ENCODE measurements at regions of chr5 and their contacts with region 1.

Region 1: DNA sequence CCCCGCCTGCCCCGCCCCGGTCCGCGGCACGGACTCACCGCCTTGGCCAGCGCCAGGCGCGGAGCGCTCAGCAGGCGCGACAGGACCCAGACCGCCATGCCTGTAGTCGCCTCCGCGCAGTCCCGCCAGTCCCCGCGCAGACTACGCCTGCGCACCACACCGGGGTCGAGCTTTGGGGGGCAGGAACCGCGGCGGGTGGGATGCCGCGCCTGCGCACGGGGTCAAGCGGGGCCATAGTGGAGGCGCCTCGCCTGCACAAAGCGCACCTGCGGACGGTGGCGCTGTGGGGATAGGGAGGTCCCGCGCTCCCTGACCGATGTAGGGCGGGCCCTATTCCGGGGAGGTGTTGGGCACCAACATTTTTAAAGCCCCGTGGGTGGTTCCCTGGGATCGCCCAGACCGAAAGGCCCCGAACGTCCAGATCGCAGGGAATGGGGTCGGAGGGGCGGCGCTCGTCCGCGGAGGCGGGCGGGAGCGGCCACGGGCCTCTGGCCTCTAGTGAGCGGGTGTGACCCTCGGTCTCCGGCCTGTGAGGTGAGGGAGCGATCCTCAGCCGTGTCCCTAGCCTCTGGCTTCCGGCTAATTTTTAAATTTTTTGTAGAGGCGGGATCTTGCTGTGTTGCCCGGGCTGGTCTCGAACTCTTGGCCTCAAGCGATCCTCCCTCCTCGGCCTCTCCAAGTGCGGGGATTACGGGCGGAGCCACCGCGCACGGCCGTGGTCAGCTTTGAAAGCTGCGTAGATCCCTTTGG is 70.8 kb upstream of the LPCAT1 start:
- DNase-seq: peak; percentile 74
- ATAC-seq: peak; percentile 97
- H3K4me3 ChIP-seq: peak overlapping the region; percentile 56 to 75
- H3K27ac ChIP-seq: peak overlapping the region; percentile 79
- H3K4me1 ChIP-seq: peaks cover 0 to 9% of the 10 kb centered on the region in 2 experiments; a peak in 2 of 4 replicates
- H3K27me3 ChIP-seq: no peaks in the 10 kb centered on the region
- CTCF ChIP-seq: peak; percentile 21 to 61 (median 59); a peak in 5 of 6 replicates
- POLR2A ChIP-seq: peak; percentile 51
- RAD21 ChIP-seq: no peak

Region 2: GRCh38 chr5:1344975-1345838 is 249.3 kb before region 1 on chr5 and contains the start of gene CLPTM1L:
- CTCF ChIA-PET with region 1: no interaction called
- POLR2A ChIA-PET with region 1: no interaction called
- RAD21 ChIA-PET with region 1: no interaction called
- intact Hi-C with region 1: loop called (anchors 10 kb)
- DNase-seq: peak; percentile 61
- ATAC-seq: peak; percentile 89
- H3K4me3 ChIP-seq: peak within 1 kb of the TSS; percentile 75 to 97
- H3K27ac ChIP-seq: peak within 1 kb of the TSS; percentile 65; the same call in 1 of the 2 replicates
- H3K4me1 ChIP-seq: peaks cover 13 to 22% of the 10 kb centered on the region in 2 experiments; a peak in 3 of 4 replicates
- H3K27me3 ChIP-seq: peaks cover 3% of the 10 kb centered on the region; the same call in 1 of the 2 replicates
- CTCF ChIP-seq: no peak
- POLR2A ChIP-seq: peak; percentile 49
- RAD21 ChIP-seq: no peak
- total RNA-seq, gene CLPTM1L: 98.4 TPM

Region 3: DNA sequence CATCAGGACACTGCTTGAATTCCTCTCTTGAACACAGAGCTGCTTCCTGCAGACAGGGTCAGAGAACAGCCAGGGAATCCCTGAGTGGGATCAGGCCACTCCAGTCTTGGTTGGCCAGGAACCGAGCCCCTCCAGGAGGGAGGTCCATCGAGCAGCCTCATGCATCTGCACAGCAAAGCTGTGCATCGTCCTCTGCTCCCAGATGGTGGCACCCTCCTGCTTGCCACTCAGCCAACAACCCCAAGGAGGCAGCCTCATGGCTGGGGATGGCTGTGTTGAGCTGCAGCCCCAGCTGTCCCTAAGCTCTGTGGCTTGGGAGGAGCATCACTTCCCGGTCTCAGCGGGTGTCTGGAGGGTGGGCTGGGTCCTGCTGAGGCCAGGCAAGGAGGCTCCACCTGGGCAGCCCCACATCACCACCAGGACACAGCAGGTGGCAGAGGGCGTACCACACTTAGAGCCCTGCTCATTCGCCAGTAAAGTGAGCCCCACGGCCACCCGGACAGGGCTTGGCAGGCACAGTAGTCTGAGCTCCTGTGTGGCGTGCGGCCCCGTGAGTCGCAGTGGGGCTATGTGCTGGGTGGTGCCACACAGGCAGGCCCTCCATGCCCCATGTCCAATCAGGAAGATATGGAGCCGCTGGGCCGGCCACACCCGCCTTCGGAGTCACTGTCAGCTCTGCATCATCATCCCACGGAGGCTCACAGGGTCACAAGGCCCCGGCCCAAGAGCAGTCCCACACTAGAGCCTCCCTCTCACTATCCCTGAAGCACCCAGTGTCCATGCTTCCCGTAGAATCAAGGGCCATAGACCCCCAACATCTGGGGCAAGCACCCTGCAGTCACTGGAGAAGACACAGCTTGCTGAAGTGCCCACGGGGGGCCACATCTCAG is 82.6 kb before region 1 on chr5:
- CTCF ChIA-PET with region 1: interaction called, 3 read pairs
- POLR2A ChIA-PET with region 1: interaction called, 5 read pairs
- RAD21 ChIA-PET with region 1: no interaction called
- intact Hi-C with region 1: loop called (anchors 5 kb)
- DNase-seq: peak; percentile 29
- ATAC-seq: peak; percentile 72
- H3K4me3 ChIP-seq: no peak overlapping the region
- H3K27ac ChIP-seq: peak overlapping the region; percentile 19; the same call in 1 of the 2 replicates
- H3K4me1 ChIP-seq: peaks cover 12 to 36% of the 10 kb centered on the region in 2 experiments
- H3K27me3 ChIP-seq: no peaks in the 10 kb centered on the region
- CTCF ChIP-seq: peak; percentile 29 to 63 (median 34); a peak in 5 of 6 replicates
- POLR2A ChIP-seq: no peak
- RAD21 ChIP-seq: peak; percentile 55

Measured in HCT116 (cell line).